CD4-positive, alpha-beta memory T cell (primary cell): ENCODE measurements at regions of chr1 and their contacts with region 1.

Region 1: GRCh38 chr1:225318706-225319575 is 108.9 kb downstream of the LBR start:
- DNase-seq: peak; percentile 8 to 41 (median 16)
- H3K4me3 ChIP-seq: no peak overlapping the region
- H3K4me3 Mint-ChIP-seq: no peak overlapping the region
- H3K27ac ChIP-seq: no peak overlapping the region
- H3K27ac Mint-ChIP-seq: peak overlapping the region in 1 of 7 donors; percentile 53
- H3K4me1 ChIP-seq: no peaks in the 10 kb centered on the region
- H3K4me1 Mint-ChIP-seq: peaks cover 0 to 2% (median under 1%) of the 10 kb centered on the region in 4 donors
- H3K27me3 ChIP-seq: no peaks in the 10 kb centered on the region
- H3K27me3 Mint-ChIP-seq: peaks cover 5 to 8% of the 10 kb centered on the region in 2 donors

Region 2: DNA sequence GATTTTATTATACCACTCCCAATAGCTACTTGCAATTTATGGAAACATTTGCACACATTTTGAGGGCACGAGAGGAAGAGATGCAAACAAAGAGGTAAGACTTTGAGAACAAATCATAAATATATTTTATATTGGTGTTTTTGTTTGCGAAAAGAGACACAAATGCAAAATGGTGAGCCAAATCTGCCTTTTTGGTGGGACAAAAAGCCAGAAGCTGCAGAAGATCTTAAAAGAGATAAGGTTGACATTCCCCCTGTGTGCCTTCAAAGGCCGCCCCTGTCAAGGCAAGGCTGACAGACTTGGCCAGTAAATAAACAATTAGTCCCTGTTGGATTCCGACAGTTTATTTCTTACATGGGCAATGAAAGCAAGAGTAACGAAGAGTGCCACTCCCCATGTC is 13.9 kb before region 1 on chr1:
- CTCF ChIA-PET with region 1: interaction called, 13 read pairs
- POLR2A ChIA-PET with region 1: no interaction called
- intact Hi-C with region 1: no loop called
- DNase-seq: no peak
- H3K4me3 ChIP-seq: no peak overlapping the region
- H3K4me3 Mint-ChIP-seq: no peak overlapping the region
- H3K27ac ChIP-seq: no peak overlapping the region
- H3K27ac Mint-ChIP-seq: no peak overlapping the region
- H3K4me1 ChIP-seq: no peaks in the 10 kb centered on the region
- H3K4me1 Mint-ChIP-seq: no peaks in the 10 kb centered on the region
- H3K27me3 ChIP-seq: no peaks in the 10 kb centered on the region
- H3K27me3 Mint-ChIP-seq: no peaks in the 10 kb centered on the region

Region 3: GRCh38 chr1:225329041-225329440 is 10.1 kb after region 1 on chr1:
- CTCF ChIA-PET with region 1: interaction called, 29 read pairs
- POLR2A ChIA-PET with region 1: no interaction called
- intact Hi-C with region 1: no loop called
- DNase-seq: no peak
- H3K4me3 ChIP-seq: no peak overlapping the region
- H3K4me3 Mint-ChIP-seq: no peak overlapping the region
- H3K27ac ChIP-seq: no peak overlapping the region
- H3K27ac Mint-ChIP-seq: no peak overlapping the region
- H3K4me1 ChIP-seq: no peaks in the 10 kb centered on the region
- H3K4me1 Mint-ChIP-seq: no peaks in the 10 kb centered on the region
- H3K27me3 ChIP-seq: peaks cover 3% of the 10 kb centered on the region
- H3K27me3 Mint-ChIP-seq: peaks cover 6 to 10% of the 10 kb centered on the region in 2 donors

Region 4: GRCh38 chr1:225362805-225363204 is 43.9 kb after region 1 on chr1:
- CTCF ChIA-PET with region 1: no interaction called
- POLR2A ChIA-PET with region 1: no interaction called
- intact Hi-C with region 1: loop called (anchors 1 kb)
- DNase-seq: no peak
- H3K4me3 ChIP-seq: no peak overlapping the region
- H3K4me3 Mint-ChIP-seq: no peak overlapping the region
- H3K27ac ChIP-seq: no peak overlapping the region
- H3K27ac Mint-ChIP-seq: no peak overlapping the region
- H3K4me1 ChIP-seq: no peaks in the 10 kb centered on the region
- H3K4me1 Mint-ChIP-seq: no peaks in the 10 kb centered on the region
- H3K27me3 ChIP-seq: no peaks in the 10 kb centered on the region
- H3K27me3 Mint-ChIP-seq: peaks cover 10 to 21% of the 10 kb centered on the region in 2 donors

Region 5: DNA sequence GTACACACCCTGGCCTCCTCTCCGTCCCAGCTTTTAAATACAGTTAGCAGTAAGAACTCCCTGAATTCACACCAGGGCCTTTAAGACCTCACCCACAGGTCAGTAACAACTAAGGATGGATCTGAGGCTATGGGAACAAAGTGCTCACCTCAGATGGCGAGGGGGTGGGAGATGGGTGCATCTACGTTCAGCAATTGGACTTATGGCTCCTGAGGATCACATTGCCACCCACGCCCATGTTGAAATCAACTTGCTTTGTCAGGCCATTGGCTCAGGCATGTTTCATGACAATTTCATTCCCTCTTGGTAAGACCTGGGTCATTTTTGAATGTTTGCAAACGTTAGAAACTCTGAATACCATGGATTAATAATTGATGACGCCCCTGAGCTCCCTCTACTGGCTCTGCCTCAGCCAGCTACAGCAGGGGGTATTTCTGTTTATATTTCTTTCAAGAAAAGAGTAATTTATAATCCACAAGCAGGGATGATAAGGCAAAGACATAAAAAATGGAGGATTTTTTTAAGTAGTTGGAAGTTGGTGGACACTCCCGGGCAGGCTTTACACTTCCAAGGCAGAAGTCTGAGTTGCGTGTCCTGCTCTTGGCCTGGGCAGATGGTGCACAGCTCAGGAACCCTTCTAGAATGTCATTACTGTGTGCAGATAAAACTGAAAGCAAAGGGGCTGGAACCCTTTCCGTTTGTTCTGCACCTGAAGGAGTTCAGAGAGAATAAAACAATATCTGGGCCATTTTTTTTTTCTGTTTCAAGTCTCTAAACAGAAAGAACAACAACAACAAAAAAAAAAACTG is 122.6 kb after region 1 on chr1:
- CTCF ChIA-PET with region 1: interaction called, 8 read pairs
- POLR2A ChIA-PET with region 1: interaction called, 3 read pairs
- intact Hi-C with region 1: loop called (anchors 5 kb)
- DNase-seq: no peak
- H3K4me3 ChIP-seq: no peak overlapping the region
- H3K4me3 Mint-ChIP-seq: peak overlapping the region; percentile 13 to 75 (median 41)
- H3K27ac ChIP-seq: peak overlapping the region; percentile 31
- H3K27ac Mint-ChIP-seq: peak overlapping the region; percentile 25 to 84 (median 49)
- H3K4me1 ChIP-seq: peaks cover 52% of the 10 kb centered on the region
- H3K4me1 Mint-ChIP-seq: peaks cover 40 to 60% (median 53%) of the 10 kb centered on the region in 4 donors
- H3K27me3 ChIP-seq: no peaks in the 10 kb centered on the region
- H3K27me3 Mint-ChIP-seq: no peaks in the 10 kb centered on the region

Region 6: GRCh38 chr1:225977937-225978748 is 659.2 kb after region 1 on chr1:
- CTCF ChIA-PET with region 1: interaction called, 18 read pairs
- POLR2A ChIA-PET with region 1: no interaction called
- intact Hi-C with region 1: loop called (anchors 1 kb)
- DNase-seq: no peak
- H3K4me3 ChIP-seq: no peak overlapping the region
- H3K4me3 Mint-ChIP-seq: no peak overlapping the region
- H3K27ac ChIP-seq: no peak overlapping the region
- H3K27ac Mint-ChIP-seq: peak overlapping the region in 1 of 7 donors; percentile 43
- H3K4me1 ChIP-seq: no peaks in the 10 kb centered on the region
- H3K4me1 Mint-ChIP-seq: peaks cover 0 to 6% (median 5%) of the 10 kb centered on the region in 4 donors
- H3K27me3 ChIP-seq: no peaks in the 10 kb centered on the region
- H3K27me3 Mint-ChIP-seq: no peaks in the 10 kb centered on the region